Mammary epithelial cell (primary cell): ENCODE measurements at regions of chr2 and their contacts with region 1.

Region 1: DNA sequence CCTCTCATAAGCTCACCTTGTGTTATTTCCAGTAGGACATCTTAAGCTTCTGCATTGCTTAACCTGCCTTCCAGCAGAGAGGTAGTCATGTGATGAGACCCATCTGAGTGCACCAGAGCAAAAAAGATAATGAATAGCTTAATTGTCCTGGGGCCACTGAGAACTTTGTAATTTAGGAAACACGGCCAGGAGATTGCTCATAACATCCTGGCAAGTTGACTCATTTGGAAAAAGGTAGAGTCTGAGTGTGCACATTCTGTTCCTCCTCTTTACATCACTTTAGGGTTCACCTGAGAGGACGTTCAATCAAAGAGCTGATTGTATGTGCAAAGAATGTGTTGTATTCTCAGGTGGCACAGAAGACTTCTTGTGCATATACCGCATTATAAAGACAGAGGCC is 830.2 kb upstream of the SOX11 start:
- DNase-seq: peak; percentile 96
- H3K4me3 ChIP-seq: no peak overlapping the region
- H3K27ac ChIP-seq: peak overlapping the region; percentile 65
- H3K4me1 ChIP-seq: peaks cover 18% of the 10 kb centered on the region
- H3K27me3 ChIP-seq: no peaks in the 10 kb centered on the region
- CTCF ChIP-seq: no peak

Region 2: GRCh38 chr2:4898706-4899105 is 36.7 kb after region 1 on chr2:
- CTCF ChIA-PET with region 1: no interaction called
- dilution Hi-C with region 1: no loop called
- in situ Hi-C with region 1: no loop called
- intact Hi-C with region 1: loop called (anchors 1 kb)
- DNase-seq: peak; percentile 73
- H3K4me3 ChIP-seq: no peak overlapping the region
- H3K27ac ChIP-seq: peak overlapping the region; percentile 24
- H3K4me1 ChIP-seq: peaks cover 17% of the 10 kb centered on the region
- H3K27me3 ChIP-seq: no peaks in the 10 kb centered on the region
- CTCF ChIP-seq: no peak

Region 3: DNA sequence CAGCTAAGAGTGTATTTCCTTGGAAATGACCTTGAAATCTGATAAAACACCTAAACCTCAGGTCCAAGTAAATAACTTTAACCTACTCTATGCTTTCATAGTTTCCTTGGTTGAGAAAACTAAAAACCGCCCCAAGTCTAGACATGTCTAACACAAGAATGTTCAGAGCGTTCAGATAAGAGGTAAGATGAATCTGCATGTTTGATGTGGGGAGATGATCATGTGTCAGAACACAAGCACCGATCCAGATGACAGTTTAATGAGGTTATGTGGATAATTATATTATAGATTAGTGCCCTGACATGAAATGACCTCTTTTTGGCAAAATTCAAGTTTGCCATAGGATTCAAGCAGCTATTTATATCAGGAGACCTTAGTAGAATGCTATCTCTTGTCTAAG is 100.4 kb after region 1 on chr2:
- CTCF ChIA-PET with region 1: no interaction called
- dilution Hi-C with region 1: no loop called
- in situ Hi-C with region 1: no loop called
- intact Hi-C with region 1: no loop called
- DNase-seq: peak; percentile 32
- H3K4me3 ChIP-seq: no peak overlapping the region
- H3K27ac ChIP-seq: no peak overlapping the region
- H3K4me1 ChIP-seq: peaks cover 6% of the 10 kb centered on the region
- H3K27me3 ChIP-seq: no peaks in the 10 kb centered on the region
- CTCF ChIP-seq: no peak